IMR-90 (cell line): ENCODE measurements at regions of chr6 and their contacts with region 1.

Region 1: DNA sequence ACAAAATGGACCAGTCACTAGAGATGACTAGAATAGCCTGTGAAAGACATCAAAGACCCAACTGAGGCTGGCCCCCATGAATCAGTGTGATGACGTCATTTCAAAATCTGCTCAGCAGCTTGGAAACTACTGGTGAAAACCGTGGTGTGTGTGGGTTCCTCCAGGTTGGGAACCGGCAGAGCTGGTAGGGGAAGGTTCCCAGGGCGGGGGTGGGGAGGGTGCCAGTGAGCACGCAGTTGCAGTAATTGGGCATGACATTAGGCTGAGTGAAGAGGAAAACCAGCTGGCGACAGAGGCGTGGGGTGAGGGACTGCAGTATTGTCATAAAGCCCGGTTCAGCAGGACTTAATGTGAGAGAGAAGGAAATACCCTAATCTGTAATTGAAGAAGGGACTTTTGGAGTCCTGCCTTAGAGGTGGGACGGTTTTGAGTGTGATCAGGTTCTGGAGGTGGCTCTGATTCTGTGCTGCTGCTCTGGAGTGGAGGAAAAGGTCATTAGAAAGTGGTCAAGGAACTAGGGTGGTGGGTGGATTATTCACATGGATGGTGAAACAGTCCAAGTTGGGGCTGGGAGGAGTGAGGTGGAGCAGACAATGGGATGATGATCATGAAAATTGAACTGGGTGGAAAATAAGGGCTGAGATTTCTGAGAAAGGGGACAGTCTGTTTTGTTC is 52.0 kb upstream of the MTHFD1L start:
- DNase-seq: peak; percentile 83
- ATAC-seq: no peak; the same call in 1 of the 2 replicates
- H3K4me3 ChIP-seq: no peak overlapping the region
- H3K27ac ChIP-seq: no peak overlapping the region
- H3K4me1 ChIP-seq: peaks cover 8% of the 10 kb centered on the region
- H3K27me3 ChIP-seq: no peaks in the 10 kb centered on the region
- CTCF ChIP-seq: no peak
- POLR2A ChIP-seq: no peak
- RAD21 ChIP-seq: no peak

Region 2: DNA sequence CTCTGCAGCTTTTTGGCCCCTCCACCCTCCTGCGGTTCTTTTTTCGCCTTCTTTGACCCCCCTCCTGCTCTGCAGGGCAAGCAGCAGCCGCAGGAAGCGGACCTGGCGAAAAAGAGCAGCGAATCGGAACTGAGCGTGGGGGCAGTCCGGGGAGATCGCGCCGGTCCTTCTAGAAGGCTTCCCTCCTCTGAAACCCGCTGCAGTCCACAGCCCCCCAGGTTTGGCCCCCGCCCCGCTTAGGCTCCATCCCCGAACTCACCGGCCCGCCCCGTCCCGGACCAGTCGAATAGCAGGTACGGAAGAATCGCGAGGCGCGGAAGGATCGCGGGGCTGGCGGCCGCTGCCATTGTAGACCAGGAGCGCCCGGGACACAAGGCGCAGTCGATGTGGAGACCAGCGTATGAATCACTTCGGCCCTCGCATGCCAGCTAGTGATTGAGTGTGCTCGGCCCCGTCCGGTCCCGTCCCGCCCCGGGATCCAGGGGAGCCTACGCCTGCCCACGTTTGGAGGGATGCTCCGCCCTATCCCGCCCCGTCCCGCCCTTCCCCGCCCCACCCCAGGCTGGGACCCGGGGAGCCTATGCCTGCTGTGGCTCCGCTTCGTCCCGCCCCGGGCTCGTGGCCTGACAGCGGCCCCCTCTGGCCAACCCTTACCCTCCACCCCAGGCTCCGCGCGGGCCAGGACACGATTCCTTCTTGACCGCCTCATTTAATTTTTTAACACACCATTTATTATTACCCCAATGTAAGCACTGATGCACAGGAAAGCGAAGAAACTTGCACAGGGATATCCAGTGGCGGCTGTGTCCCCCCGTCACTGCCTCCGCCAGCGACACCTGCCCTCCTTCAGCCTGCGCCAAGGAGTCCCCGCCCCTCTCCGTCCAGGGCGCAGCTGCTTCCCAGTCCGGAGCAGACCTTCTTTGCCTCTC is 744.5 kb before region 1 on chr6 and contains the start of gene ULBP3:
- CTCF ChIA-PET with region 1: no interaction called
- POLR2A ChIA-PET with region 1: no interaction called
- dilution Hi-C with region 1: no loop called
- in situ Hi-C with region 1: loop called (anchors 10 kb)
- intact Hi-C with region 1: no loop called
- DNase-seq: peak; percentile 93
- ATAC-seq: peak; percentile 98
- H3K4me3 ChIP-seq: peak within 1 kb of the TSS; percentile 70
- H3K27ac ChIP-seq: peak within 1 kb of the TSS; percentile 63
- H3K4me1 ChIP-seq: peaks cover 4% of the 10 kb centered on the region; the same call in 1 of the 2 replicates
- H3K27me3 ChIP-seq: peaks cover 1% of the 10 kb centered on the region; the same call in 1 of the 2 replicates
- CTCF ChIP-seq: peak; percentile 56
- POLR2A ChIP-seq: peak; percentile 73
- RAD21 ChIP-seq: peak; percentile 36
- total RNA-seq, gene ULBP3: 35.1 and 43.0 TPM in 2 replicates

Region 3: DNA sequence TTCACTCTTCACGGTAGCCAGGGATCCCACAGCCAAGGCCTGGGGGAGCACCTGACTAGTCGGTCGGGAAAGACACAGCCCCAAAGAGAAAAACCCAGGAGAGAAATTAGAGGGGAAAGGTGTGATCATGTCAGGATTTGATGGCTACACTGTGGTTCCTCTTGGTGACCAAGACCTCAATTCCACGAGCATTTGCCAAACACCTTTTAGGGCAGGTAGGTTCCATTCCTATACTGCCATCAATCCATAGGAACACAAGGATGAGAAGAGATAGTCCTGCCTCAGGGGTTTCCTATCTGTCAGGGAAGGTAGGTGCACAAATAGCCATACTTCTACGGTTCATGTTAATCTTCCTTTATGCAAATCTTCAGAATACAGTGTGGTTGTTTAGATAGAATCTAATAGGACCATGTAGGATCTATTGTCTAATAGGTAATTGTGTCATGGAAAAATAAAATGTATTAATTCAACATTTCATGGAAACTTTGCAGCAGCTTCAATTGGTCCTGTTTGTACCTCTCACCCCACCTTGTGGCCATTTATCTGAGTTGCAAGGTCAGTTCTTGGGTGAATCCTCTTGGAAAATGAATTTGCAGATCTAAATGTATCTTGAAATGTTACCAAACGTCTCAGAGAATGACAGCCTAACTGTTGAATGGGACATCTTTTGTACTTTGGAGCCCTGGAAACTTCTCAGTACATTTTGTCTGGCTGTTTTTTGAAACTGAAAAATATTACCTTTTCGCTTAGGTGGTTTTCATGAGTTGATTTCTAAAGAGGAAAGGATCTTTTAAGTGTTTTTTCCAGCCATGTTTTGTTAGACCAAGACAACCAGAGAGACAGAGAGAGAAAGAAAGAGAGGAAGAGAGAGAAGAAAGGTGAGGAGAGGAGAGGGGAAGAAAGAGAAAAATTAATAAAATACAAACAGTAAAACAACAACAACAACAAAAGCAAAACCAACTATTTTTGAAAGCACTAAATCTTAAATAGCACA is 478.4 kb before region 1 on chr6:
- CTCF ChIA-PET with region 1: no interaction called
- POLR2A ChIA-PET with region 1: no interaction called
- dilution Hi-C with region 1: no loop called
- in situ Hi-C with region 1: no loop called
- intact Hi-C with region 1: loop called (anchors 2 kb)
- DNase-seq: peak; percentile 82
- ATAC-seq: peak; percentile 75
- H3K4me3 ChIP-seq: no peak overlapping the region
- H3K27ac ChIP-seq: no peak overlapping the region
- H3K4me1 ChIP-seq: no peaks in the 10 kb centered on the region
- H3K27me3 ChIP-seq: peaks cover 6% of the 10 kb centered on the region
- CTCF ChIP-seq: peak; percentile 89
- POLR2A ChIP-seq: no peak
- RAD21 ChIP-seq: peak; percentile 90

Region 4: DNA sequence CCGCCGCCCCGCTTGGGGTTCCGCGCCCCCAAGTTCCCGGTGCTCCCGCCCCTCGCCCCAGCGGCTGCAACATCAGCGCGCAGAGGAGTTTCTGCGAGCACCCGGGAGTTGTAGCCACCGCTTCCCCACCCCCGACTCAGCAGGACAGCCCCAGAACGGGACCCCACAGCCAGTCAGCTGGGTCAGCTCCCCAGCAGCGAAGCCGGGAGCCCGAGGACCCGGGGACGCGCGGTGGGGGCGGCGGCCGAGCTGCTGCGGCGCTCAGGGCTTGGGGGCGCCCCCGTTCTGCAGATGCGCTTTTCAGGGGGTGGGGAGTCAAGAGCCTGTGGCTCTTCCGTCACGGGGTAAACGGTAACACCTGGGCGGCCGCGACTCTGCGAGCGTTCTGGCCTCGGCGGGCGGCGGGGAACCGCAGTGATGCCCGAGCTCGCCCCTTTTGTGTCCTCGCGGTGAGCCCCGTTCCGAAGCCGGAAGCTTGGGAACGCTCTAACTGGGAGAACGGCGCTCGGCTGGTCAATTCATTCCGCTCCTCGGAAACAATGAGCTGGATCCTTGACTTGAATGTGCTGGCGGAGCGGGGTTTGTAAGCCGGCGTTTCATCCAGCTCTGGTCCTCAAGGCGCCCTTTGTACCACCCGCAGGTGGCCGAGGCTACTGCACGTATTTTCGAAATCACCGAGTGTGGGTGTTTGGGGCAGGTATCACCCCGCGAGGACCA is 213.0 kb before region 1 on chr6:
- CTCF ChIA-PET with region 1: no interaction called
- POLR2A ChIA-PET with region 1: no interaction called
- dilution Hi-C with region 1: no loop called
- in situ Hi-C with region 1: no loop called
- intact Hi-C with region 1: loop called (anchors 10 kb)
- DNase-seq: peak; percentile 26
- ATAC-seq: peak; percentile 57
- H3K4me3 ChIP-seq: peak overlapping the region; percentile 41
- H3K27ac ChIP-seq: no peak overlapping the region
- H3K4me1 ChIP-seq: no peaks in the 10 kb centered on the region
- H3K27me3 ChIP-seq: peaks cover 45% of the 10 kb centered on the region
- CTCF ChIP-seq: no peak
- POLR2A ChIP-seq: no peak
- RAD21 ChIP-seq: no peak

Region 5: GRCh38 chr6:150667977-150668716 is 145.3 kb before region 1 on chr6:
- CTCF ChIA-PET with region 1: no interaction called
- POLR2A ChIA-PET with region 1: no interaction called
- dilution Hi-C with region 1: no loop called
- in situ Hi-C with region 1: no loop called
- intact Hi-C with region 1: no loop called
- DNase-seq: peak; percentile 58
- ATAC-seq: peak; percentile 81
- H3K4me3 ChIP-seq: no peak overlapping the region
- H3K27ac ChIP-seq: no peak overlapping the region
- H3K4me1 ChIP-seq: peaks cover 2% of the 10 kb centered on the region; the same call in 1 of the 2 replicates
- H3K27me3 ChIP-seq: no peaks in the 10 kb centered on the region
- CTCF ChIP-seq: no peak; the same call in 1 of the 2 replicates
- POLR2A ChIP-seq: no peak
- RAD21 ChIP-seq: no peak

Region 6: DNA sequence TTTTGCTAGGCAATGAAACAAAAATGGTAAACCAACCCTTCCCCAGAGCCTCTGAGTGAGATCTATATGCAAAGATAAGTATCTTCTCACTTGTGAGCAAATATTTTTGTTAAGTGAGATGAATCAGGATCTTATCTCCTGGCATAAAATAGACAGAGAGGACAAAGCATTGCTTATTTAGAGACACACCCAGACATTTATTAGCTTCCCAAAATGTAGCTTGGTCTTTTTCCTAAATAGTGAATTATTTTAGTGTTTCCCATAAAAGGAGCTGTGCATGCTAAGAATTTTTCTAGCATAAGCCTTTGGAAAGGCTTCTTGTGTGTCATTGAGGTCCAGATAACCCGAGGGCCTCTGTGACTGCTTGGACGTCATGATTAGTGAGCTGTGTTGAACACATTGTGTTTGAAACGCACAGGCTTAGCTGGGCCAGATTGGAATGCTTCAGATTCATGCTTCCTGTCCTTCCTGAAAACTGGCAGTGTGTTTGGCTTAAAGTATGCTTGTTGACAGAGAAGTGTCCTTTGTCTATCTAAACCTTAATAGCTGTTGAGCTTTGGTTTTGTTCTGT is 68.5 kb after region 1 on chr6:
- CTCF ChIA-PET with region 1: no interaction called
- POLR2A ChIA-PET with region 1: no interaction called
- dilution Hi-C with region 1: no loop called
- in situ Hi-C with region 1: no loop called
- intact Hi-C with region 1: loop called (anchors 5 kb)
- DNase-seq: peak; percentile 100
- ATAC-seq: peak; percentile 91
- H3K4me3 ChIP-seq: no peak overlapping the region
- H3K27ac ChIP-seq: peak overlapping the region; percentile 100; the same call in 1 of the 2 replicates
- H3K4me1 ChIP-seq: peaks cover 27% of the 10 kb centered on the region
- H3K27me3 ChIP-seq: no peaks in the 10 kb centered on the region
- CTCF ChIP-seq: no peak
- POLR2A ChIP-seq: peak; percentile 78
- RAD21 ChIP-seq: no peak

Region 7: DNA sequence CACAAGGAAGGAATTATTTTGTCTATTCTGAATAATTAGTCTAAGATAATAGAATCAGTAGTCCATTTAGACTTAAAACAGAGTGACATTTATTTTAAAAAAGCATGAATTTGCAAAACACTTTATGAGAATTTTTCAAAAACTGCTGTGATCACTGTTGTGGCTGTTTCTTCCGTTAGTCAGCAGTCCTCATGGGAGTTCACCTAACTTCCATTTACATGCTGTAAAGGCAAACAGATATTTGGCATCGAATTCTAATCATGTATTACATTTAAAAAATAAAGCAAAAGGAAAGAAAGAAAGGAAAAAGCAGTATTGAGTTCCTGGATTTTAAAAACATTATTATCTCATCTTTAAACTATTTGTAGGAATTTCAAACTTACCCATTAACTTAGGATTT is 163.8 kb after region 1 on chr6:
- CTCF ChIA-PET with region 1: no interaction called
- POLR2A ChIA-PET with region 1: no interaction called
- dilution Hi-C with region 1: no loop called
- in situ Hi-C with region 1: no loop called
- intact Hi-C with region 1: no loop called
- DNase-seq: no peak
- ATAC-seq: no peak
- H3K4me3 ChIP-seq: no peak overlapping the region
- H3K27ac ChIP-seq: no peak overlapping the region
- H3K4me1 ChIP-seq: peaks cover 6% of the 10 kb centered on the region
- H3K27me3 ChIP-seq: no peaks in the 10 kb centered on the region
- CTCF ChIP-seq: no peak
- POLR2A ChIP-seq: no peak
- RAD21 ChIP-seq: no peak

Region 8: DNA sequence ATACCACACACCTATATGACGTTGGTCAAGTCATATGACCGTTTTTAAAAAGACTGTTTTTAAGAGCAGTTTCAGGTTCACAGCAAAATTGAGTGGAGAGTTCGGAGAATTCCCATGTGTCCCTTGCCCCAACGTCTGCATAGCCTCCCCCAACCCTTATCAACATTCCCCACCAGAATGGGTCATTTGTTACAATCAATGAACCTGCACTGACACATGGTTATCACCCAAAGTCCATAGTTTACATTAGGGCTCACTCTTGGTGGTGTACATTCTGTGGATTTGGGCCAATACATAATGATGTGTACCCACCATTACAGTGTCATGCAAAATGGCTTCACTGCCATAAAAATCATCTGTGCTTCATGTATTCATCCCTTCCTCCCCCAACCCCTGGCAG is 525.9 kb after region 1 on chr6:
- CTCF ChIA-PET with region 1: interaction called, 10 read pairs
- POLR2A ChIA-PET with region 1: no interaction called
- dilution Hi-C with region 1: no loop called
- in situ Hi-C with region 1: no loop called
- intact Hi-C with region 1: loop called (anchors 1 kb)
- DNase-seq: no peak
- ATAC-seq: no peak
- H3K4me3 ChIP-seq: no peak overlapping the region
- H3K27ac ChIP-seq: no peak overlapping the region
- H3K4me1 ChIP-seq: no peaks in the 10 kb centered on the region
- H3K27me3 ChIP-seq: no peaks in the 10 kb centered on the region
- CTCF ChIP-seq: no peak
- POLR2A ChIP-seq: no peak
- RAD21 ChIP-seq: no peak